IMR-90 (cell line): ENCODE measurements at regions of chr4 and their contacts with region 1.

Region 1: GRCh38 chr4:20412072-20412471 is 160.4 kb downstream of the SLIT2 start:
- DNase-seq: no peak
- ATAC-seq: no peak
- H3K4me3 ChIP-seq: no peak overlapping the region
- H3K27ac ChIP-seq: no peak overlapping the region
- H3K4me1 ChIP-seq: no peaks in the 10 kb centered on the region
- H3K27me3 ChIP-seq: no peaks in the 10 kb centered on the region
- CTCF ChIP-seq: no peak
- POLR2A ChIP-seq: no peak
- RAD21 ChIP-seq: no peak

Region 2: DNA sequence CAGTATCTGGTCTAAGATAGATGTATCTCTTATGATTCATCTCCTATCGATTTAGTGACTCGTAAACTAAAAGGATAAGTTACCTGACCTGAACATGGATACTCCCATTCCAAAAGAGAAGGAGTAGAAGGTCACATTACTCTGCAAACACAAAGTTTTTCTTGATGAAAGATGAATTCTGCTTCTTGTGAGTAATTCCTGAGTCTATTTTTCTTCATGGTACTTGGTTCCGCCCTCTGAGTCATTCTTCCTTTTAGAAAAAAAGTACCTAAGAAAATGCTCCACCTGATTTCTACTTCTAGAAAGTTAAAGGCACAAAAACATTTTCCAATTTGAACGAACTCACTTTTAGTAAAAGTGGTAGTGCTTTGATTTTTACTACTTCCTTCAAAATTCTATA is 383.4 kb before region 1 on chr4:
- CTCF ChIA-PET with region 1: no interaction called
- POLR2A ChIA-PET with region 1: no interaction called
- dilution Hi-C with region 1: no loop called
- in situ Hi-C with region 1: no loop called
- intact Hi-C with region 1: no loop called
- DNase-seq: peak; percentile 55
- ATAC-seq: no peak
- H3K4me3 ChIP-seq: no peak overlapping the region
- H3K27ac ChIP-seq: no peak overlapping the region
- H3K4me1 ChIP-seq: no peaks in the 10 kb centered on the region
- H3K27me3 ChIP-seq: no peaks in the 10 kb centered on the region
- CTCF ChIP-seq: no peak
- POLR2A ChIP-seq: no peak
- RAD21 ChIP-seq: no peak

Region 3: DNA sequence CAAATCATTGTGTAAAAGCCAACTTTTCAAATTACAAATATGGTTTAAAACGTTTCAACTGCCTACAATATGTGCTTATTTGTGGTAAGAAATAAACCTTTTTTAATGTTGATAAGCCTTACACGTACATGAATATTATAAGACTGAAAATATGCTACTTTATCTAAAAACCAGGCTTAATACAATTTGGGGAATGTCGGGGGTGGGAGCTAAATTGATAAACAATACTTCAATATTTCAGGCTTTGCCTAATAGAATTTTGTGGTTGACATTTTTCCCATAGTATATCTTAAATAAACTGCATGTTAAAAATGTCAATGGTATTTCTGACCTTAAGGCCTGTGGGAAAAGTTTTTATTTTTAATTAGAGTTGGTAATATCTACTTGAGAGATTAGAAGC is 230.1 kb before region 1 on chr4:
- CTCF ChIA-PET with region 1: interaction called, 11 read pairs
- POLR2A ChIA-PET with region 1: no interaction called
- dilution Hi-C with region 1: no loop called
- in situ Hi-C with region 1: no loop called
- intact Hi-C with region 1: no loop called
- DNase-seq: no peak
- ATAC-seq: no peak
- H3K4me3 ChIP-seq: no peak overlapping the region
- H3K27ac ChIP-seq: no peak overlapping the region
- H3K4me1 ChIP-seq: no peaks in the 10 kb centered on the region
- H3K27me3 ChIP-seq: no peaks in the 10 kb centered on the region
- CTCF ChIP-seq: no peak
- POLR2A ChIP-seq: no peak
- RAD21 ChIP-seq: no peak